ENCODE measurements at regions of chr3 and their contacts with region 1.

Region 1: GRCh38 chr3:16286161-16286560 is 21.1 kb downstream of the OXNAD1 start:
- DNase-seq: no peak
- H3K4me3 ChIP-seq: no peak overlapping the region
- CTCF ChIP-seq: no peak
- POLR2A ChIP-seq: no peak

Region 2: GRCh38 chr3:16550676-16551341 is 264.6 kb after region 1 on chr3:
- intact Hi-C with region 1: loop called (anchors 5 kb)
- DNase-seq: peak; percentile 83 to 91
- H3K4me3 ChIP-seq: no peak overlapping the region
- CTCF ChIP-seq: peak in 1 of 3 donors; percentile 61
- POLR2A ChIP-seq: no peak